Endothelial cell of umbilical vein (primary cell): ENCODE measurements at regions of chrX and their contacts with region 1.

Region 1: DNA sequence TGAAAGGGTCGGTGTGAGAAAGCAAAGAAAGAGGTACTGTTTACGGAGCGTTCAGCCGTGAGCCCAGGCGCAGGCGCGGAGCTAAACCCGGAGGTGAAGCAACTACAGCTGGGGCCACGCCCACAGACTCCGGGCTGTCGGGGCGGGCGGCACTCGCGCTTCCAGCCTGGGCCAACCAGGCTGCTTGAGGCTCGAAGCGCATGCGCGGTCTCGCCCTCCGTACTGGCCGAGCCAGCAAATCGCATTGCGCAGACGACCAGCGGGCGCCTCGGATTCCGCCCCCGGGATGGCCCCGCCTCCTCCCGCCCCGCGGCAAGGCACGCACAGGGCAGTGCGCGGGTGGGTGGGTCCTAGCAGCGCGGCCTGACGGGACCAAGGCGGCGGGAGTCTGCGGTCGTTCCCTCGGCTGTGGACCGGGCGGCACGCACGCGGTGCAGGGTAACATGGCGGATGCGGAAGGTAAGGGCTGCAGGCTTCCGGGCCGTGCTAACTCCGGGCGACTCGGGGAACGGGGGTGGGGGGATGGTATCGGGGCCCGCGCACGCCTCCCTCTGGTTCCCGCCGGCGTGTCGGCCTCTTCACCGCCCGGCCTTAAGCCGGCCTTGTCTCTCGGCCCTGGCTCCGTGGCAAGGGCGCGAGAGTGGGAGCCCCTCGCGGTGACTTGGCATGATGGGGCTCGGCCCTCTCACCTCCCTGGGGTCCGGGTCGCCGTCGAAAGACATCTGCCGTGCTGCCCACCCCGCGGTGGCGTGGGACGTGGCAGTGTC is at the start of gene DKC1:
- DNase-seq: peak; percentile 95
- H3K4me3 ChIP-seq: peak within 1 kb of the TSS; percentile 4 to 62 (median 59)
- H3K27ac ChIP-seq: peak within 1 kb of the TSS; percentile 36
- H3K4me1 ChIP-seq: peaks cover 10% of the 10 kb centered on the region
- H3K27me3 ChIP-seq: no peaks in the 10 kb centered on the region
- CTCF ChIP-seq: peak in 1 of 2 donors; percentile 9
- POLR2A ChIP-seq: peak; percentile 63
- total RNA-seq, gene DKC1: 63.7 and 69.1 TPM in 2 replicates

Region 2: GRCh38 chrX:154799554-154800348 is 37.0 kb after region 1 on chrX:
- CTCF ChIA-PET with region 1: no interaction called
- POLR2A ChIA-PET with region 1: no interaction called
- dilution Hi-C with region 1: no loop called
- intact Hi-C with region 1: loop called (anchors 1 kb)
- DNase-seq: peak; percentile 91
- H3K4me3 ChIP-seq: no peak overlapping the region
- H3K27ac ChIP-seq: peak overlapping the region; percentile 91
- H3K4me1 ChIP-seq: peaks cover 35% of the 10 kb centered on the region
- H3K27me3 ChIP-seq: no peaks in the 10 kb centered on the region
- CTCF ChIP-seq: no peak
- POLR2A ChIP-seq: no peak

Region 3: GRCh38 chrX:154804957-154805695 is 42.4 kb after region 1 on chrX and contains the start of gene MPP1:
- CTCF ChIA-PET with region 1: no interaction called
- POLR2A ChIA-PET with region 1: no interaction called
- dilution Hi-C with region 1: no loop called
- intact Hi-C with region 1: loop called (anchors 1 kb)
- DNase-seq: peak; percentile 81
- H3K4me3 ChIP-seq: peak within 1 kb of the TSS; percentile 27 to 50 (median 50)
- H3K27ac ChIP-seq: peak within 1 kb of the TSS; percentile 7
- H3K4me1 ChIP-seq: peaks cover 31% of the 10 kb centered on the region
- H3K27me3 ChIP-seq: no peaks in the 10 kb centered on the region
- CTCF ChIP-seq: no peak
- POLR2A ChIP-seq: no peak
- total RNA-seq, gene MPP1: 27.0 and 32.3 TPM in 2 replicates

Region 4: DNA sequence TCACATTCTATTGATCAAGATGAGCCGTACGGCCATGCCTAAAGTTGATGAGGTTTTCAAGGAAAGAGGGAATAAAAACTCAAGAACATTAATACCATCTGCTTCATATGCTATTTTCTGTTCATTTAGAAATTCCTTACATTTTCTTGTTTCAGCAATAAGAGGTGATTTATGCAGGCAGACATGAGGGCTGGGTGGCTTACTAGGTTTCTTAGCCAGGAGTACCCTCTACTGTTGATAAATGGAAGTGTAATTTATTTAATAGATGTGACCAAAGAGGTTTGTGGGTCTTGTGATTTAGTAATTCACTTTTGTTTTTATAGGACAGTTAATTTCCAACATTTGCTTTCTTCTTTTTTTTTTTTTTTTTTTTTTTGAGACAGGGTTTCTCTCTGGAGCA is 78.2 kb after region 1 on chrX:
- CTCF ChIA-PET with region 1: interaction called, 3 read pairs
- POLR2A ChIA-PET with region 1: no interaction called
- dilution Hi-C with region 1: no loop called
- intact Hi-C with region 1: loop called (anchors 2 kb)
- DNase-seq: peak; percentile 64
- H3K4me3 ChIP-seq: no peak overlapping the region
- H3K27ac ChIP-seq: no peak overlapping the region
- H3K4me1 ChIP-seq: no peaks in the 10 kb centered on the region
- H3K27me3 ChIP-seq: no peaks in the 10 kb centered on the region
- CTCF ChIP-seq: peak; percentile 14 to 31
- POLR2A ChIP-seq: no peak